Dorsolateral prefrontal cortex (tissue), 120 donors: ENCODE measurements at regions of chrX and their contacts with region 1.

Region 1: GRCh38 chrX:150568320-150569154 is at the start of gene MTM1:
- DNase-seq: peak; percentile 84 to 95 (median 91)
- H3K4me3 ChIP-seq: peak within 1 kb of the TSS; percentile 30 to 80 (median 69)
- H3K27ac ChIP-seq: peak within 1 kb of the TSS in 50 of 59 donors; percentile 12 to 86 (median 66)
- H3K27me3 ChIP-seq: peaks cover 0 to 54% (median 9%) of the 10 kb centered on the region in 45 donors
- CTCF ChIP-seq: peak in 9 of 56 donors; percentile 8 to 30 (median 20)
- total RNA-seq, gene MTM1: 16.7 to 38.6 (median 25.0) TPM

Region 2: DNA sequence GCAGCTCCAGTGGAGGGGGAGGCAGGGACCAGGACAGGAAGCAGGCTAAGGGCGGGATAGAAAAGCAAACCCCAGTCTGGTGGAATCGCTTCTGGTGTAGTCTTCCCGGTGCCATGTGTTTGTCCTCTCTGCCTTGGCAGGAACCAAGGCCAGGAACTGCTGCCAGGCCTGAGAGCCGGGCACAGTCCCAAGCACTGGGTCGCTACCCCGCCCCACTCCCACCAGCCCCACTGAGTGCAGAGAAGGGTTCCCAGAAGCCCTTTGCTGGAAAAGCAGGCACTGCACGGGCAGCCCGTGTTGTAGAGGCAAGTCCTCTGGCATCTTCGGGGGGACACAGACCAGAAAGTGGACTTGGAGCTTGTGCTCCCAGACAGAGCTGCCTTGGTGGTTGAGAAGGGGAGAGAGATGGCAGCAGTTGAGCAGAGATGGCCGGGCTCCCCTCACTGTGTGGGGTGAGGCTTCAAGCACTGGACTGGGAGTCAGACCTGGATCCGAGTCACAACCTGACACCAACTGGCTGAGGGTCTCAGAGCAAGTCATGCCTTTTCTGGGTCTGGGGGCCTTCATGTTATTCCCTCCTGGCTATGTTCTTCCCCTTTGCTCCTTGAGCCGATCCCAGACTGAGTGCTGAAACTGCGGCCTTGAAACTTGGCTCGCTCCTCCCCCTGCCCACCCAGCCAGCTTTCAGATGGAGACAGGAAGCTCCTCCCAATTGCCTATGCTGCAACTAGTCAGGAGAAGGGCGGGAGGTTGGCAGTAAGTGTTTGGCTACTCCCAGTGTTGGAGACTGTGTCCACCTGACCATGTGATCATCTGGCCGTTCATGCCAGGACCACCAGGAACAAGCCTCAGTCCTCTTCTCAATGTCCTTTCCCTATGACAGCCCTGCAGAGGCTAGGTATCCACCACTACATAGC is 59.8 kb before region 1 on chrX:
- intact Hi-C with region 1: no loop called
- DNase-seq: peak in 9 of 10 donors; percentile 39 to 75 (median 57)
- H3K4me3 ChIP-seq: peak overlapping the region in 8 of 59 donors; percentile 3 to 30 (median 16)
- H3K27ac ChIP-seq: peak overlapping the region in 53 of 59 donors; percentile 34 to 85 (median 69)
- H3K27me3 ChIP-seq: peaks cover 0 to 88% (median 15%) of the 10 kb centered on the region in 45 donors
- CTCF ChIP-seq: peak in 1 of 56 donors; percentile 22

Region 3: GRCh38 chrX:150547375-150548115 is 21.0 kb before region 1 on chrX:
- intact Hi-C with region 1: loop called in 1 of 2 experiments (anchors 2 kb)
- DNase-seq: peak; percentile 56 to 86 (median 66)
- H3K4me3 ChIP-seq: peak overlapping the region; percentile 13 to 62 (median 46)
- H3K27ac ChIP-seq: peak overlapping the region in 58 of 59 donors; percentile 29 to 93 (median 83)
- H3K27me3 ChIP-seq: peaks cover 0 to 58% (median 10%) of the 10 kb centered on the region in 45 donors
- CTCF ChIP-seq: peak in 1 of 56 donors; percentile 35

Region 4: DNA sequence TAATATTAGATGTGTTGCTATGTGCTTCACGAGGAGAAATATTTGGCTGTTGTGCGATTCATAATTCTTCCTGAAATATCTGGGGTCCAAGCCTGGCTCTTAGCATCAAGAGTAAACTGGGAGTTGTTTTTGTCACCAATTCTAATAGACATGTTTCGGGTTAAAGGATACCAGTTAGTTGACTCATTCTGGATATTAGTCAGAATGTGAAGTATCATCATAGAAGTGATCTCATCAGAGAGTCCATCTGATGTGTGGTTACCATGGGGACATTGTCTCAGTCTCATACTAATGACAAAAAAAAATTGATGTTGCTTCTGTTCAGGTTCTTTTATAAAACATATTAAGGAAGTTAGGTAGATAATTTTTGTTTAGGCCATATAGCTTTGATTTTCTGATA is 67.4 kb after region 1 on chrX:
- intact Hi-C with region 1: no loop called
- DNase-seq: no peak
- H3K4me3 ChIP-seq: no peak overlapping the region
- H3K27ac ChIP-seq: no peak overlapping the region
- H3K27me3 ChIP-seq: peaks cover 0 to 41% (median 8%) of the 10 kb centered on the region in 45 donors
- CTCF ChIP-seq: no peak

Region 5: DNA sequence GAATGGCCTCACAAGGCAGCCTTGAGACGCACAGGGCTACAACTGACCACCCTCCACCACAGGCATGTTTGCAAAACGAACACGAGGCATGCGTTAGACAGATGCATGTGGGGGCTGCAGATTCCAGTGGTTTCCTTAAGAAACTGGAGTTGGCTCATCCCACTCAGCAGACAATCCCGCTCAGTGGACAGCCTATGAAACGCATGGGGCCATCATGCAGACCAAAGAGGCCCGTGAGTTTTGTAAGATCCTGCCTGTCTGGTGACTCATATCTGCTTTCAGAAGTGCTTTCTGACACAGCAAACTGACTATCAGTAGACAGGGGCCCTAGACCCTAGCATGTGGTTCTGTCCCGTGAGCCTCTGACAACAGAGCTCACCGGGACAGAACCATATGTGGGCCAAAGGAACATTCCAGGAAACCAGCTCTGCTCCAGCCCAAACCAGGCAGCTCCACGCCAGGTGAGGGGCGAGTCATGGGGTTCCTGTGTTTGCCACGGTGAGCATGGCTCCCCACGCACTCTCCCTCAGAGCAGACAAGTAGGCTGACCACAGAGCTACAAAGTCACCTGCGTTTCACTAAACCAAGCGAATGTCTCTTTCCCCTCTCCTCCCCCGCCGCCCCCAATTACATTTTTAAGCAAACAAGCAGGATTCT is 199.1 kb after region 1 on chrX:
- intact Hi-C with region 1: no loop called
- DNase-seq: no peak
- H3K4me3 ChIP-seq: no peak overlapping the region
- H3K27ac ChIP-seq: peak overlapping the region in 51 of 59 donors; percentile 63 to 94 (median 87)
- H3K27me3 ChIP-seq: peaks cover 0 to 56% (median 0%) of the 10 kb centered on the region in 45 donors
- CTCF ChIP-seq: no peak